PC-3 (cell line): ENCODE measurements at regions of chr17 and their contacts with region 1.

Region 1: DNA sequence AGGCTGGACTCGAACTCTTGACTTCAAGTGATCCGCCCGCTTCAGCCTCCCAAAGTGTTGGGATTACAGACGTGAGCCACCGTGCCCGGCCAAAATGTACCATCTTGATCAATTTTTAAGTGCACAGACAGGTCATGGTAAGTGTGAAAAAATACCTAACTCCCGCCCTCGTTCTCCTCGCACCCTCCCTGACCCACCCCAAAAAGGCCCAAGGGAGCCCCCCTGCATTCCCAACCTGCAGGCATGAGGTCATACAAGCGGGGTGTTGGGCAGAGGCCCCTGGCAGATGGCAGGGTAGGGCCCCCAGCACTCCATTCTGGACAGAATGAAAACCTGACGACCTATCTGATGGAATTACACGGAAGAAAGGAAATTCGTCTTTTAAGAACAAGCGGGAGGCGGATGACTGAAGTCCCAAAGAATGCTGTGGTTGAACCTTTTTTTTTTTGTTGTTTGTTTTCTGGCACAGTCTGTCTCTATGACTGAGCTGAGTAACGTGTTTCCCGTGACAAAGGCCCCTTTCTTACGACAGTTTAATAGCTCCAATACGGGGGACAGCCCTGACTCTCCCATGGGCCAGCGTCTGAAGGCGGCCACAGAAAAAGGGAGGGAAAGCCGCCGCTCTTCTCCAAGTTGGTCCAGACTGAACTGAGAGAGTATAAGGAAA is 376.4 kb downstream of the SLC39A11 start:
- DNase-seq: peak; percentile 99
- ATAC-seq: peak; percentile 95
- H3K4me3 ChIP-seq: no peak overlapping the region
- H3K27ac ChIP-seq: peak overlapping the region; percentile 95
- H3K4me1 ChIP-seq: peaks cover 36% of the 10 kb centered on the region
- H3K27me3 ChIP-seq: no peaks in the 10 kb centered on the region
- CTCF ChIP-seq: no peak

Region 2: GRCh38 chr17:72691586-72691985 is 24.5 kb before region 1 on chr17:
- CTCF ChIA-PET with region 1: no interaction called
- POLR2A ChIA-PET with region 1: interaction called, 13 read pairs
- intact Hi-C with region 1: no loop called
- DNase-seq: peak; percentile 94
- ATAC-seq: peak; percentile 92
- H3K4me3 ChIP-seq: no peak overlapping the region
- H3K27ac ChIP-seq: peak overlapping the region; percentile 93
- H3K4me1 ChIP-seq: peaks cover 23% of the 10 kb centered on the region
- H3K27me3 ChIP-seq: no peaks in the 10 kb centered on the region
- CTCF ChIP-seq: no peak

Region 3: GRCh38 chr17:72705905-72706395 is 10.1 kb before region 1 on chr17:
- CTCF ChIA-PET with region 1: no interaction called
- POLR2A ChIA-PET with region 1: interaction called, 8 read pairs
- intact Hi-C with region 1: loop called (anchors 1 kb)
- DNase-seq: no peak
- ATAC-seq: no peak
- H3K4me3 ChIP-seq: no peak overlapping the region
- H3K27ac ChIP-seq: peak overlapping the region; percentile 43
- H3K4me1 ChIP-seq: peaks cover 47% of the 10 kb centered on the region
- H3K27me3 ChIP-seq: no peaks in the 10 kb centered on the region
- CTCF ChIP-seq: no peak